CD8-positive, alpha-beta T cell (primary cell): ENCODE measurements at regions of chr6 and their contacts with region 1.

Region 1: GRCh38 chr6:170271771-170272314 is 19.0 kb downstream of the DLL1 start:
- DNase-seq: peak; percentile 51 to 95 (median 80)
- ATAC-seq: peak; percentile 93
- H3K4me3 ChIP-seq: peak overlapping the region; percentile 46 to 54
- H3K4me3 Mint-ChIP-seq: peak overlapping the region; percentile 88
- H3K27ac ChIP-seq: peak overlapping the region; percentile 63 to 71
- H3K27ac Mint-ChIP-seq: peak overlapping the region; percentile 93
- H3K4me1 ChIP-seq: peaks cover 25% of the 10 kb centered on the region
- H3K4me1 Mint-ChIP-seq: peaks cover 24% of the 10 kb centered on the region
- H3K27me3 ChIP-seq: peaks cover 0 to 19% of the 10 kb centered on the region in 2 experiments
- H3K27me3 Mint-ChIP-seq: no peaks in the 10 kb centered on the region
- CTCF ChIP-seq: no peak

Region 2: GRCh38 chr6:169978615-169979513 is 293.0 kb before region 1 on chr6:
- CTCF ChIA-PET with region 1: no interaction called
- POLR2A ChIA-PET with region 1: no interaction called
- intact Hi-C with region 1: no loop called
- DNase-seq: peak in 1 of 9 experiments; percentile 4
- ATAC-seq: no peak
- H3K4me3 ChIP-seq: no peak overlapping the region
- H3K4me3 Mint-ChIP-seq: no peak overlapping the region
- H3K27ac ChIP-seq: no peak overlapping the region
- H3K27ac Mint-ChIP-seq: no peak overlapping the region
- H3K4me1 ChIP-seq: no peaks in the 10 kb centered on the region
- H3K4me1 Mint-ChIP-seq: no peaks in the 10 kb centered on the region
- H3K27me3 ChIP-seq: peaks cover 0 to 6% of the 10 kb centered on the region in 2 experiments
- H3K27me3 Mint-ChIP-seq: peaks cover 9% of the 10 kb centered on the region
- CTCF ChIP-seq: no peak

Region 3: GRCh38 chr6:170286246-170286933 is 14.5 kb after region 1 on chr6:
- CTCF ChIA-PET with region 1: interaction called, 4 read pairs
- POLR2A ChIA-PET with region 1: interaction called, 41 read pairs
- intact Hi-C with region 1: loop called in 1 of 2 experiments (anchors 2 kb)
- DNase-seq: no peak
- ATAC-seq: no peak
- H3K4me3 ChIP-seq: no peak overlapping the region
- H3K4me3 Mint-ChIP-seq: no peak overlapping the region
- H3K27ac ChIP-seq: no peak overlapping the region
- H3K27ac Mint-ChIP-seq: peak overlapping the region; percentile 39
- H3K4me1 ChIP-seq: peaks cover 14% of the 10 kb centered on the region
- H3K4me1 Mint-ChIP-seq: peaks cover 10% of the 10 kb centered on the region
- H3K27me3 ChIP-seq: peaks cover 0 to 19% of the 10 kb centered on the region in 2 experiments
- H3K27me3 Mint-ChIP-seq: peaks cover 2% of the 10 kb centered on the region
- CTCF ChIP-seq: no peak